GM10248 (cell line): ENCODE measurements at regions of chr10 and their contacts with region 1.

Region 1: GRCh38 chr10:107480781-107481180 is 316.3 kb upstream of the SORCS1 start:
- DNase-seq: no peak
- CTCF ChIP-seq: no peak

Region 2: GRCh38 chr10:107492389-107492788 is 11.6 kb after region 1 on chr10:
- CTCF ChIA-PET with region 1: interaction called, 13 read pairs
- POLR2A ChIA-PET with region 1: no interaction called
- DNase-seq: no peak
- CTCF ChIP-seq: no peak